ENCODE measurements at regions of chr2 and their contacts with region 1.

Region 1: DNA sequence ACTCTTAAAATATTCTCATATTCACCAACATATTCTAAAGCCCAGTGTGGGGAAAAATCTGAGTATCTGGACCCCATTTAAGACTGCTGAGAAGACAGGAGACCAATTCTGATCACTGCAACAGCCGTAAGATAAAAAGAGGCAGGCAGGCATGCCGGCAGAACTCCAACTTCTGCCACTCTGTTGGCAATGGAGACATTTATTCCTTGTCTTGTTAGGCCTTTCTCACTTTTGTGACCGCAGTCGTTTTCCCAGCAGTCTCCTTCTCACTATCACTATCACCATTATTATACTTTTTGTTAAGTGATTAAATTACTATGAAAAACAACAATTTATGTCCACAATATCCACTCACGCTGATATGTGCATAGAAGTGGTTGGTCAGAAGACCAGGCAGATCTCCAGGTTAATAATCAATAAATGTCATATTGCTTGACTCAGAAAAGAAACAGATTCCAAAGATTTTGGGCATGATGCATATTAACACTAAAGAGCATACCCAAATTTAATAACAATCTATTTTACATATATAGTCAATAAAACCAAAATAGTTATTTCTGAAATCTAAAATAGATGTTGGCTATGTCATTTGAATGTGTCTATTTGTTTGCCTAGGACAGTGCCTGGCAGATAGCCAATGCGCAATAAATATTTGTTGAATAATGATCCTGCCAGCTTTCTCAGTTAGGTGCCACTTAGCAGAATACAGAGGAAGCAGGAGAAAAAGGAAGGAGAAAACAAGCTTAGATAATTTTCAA is 38.2 kb downstream of the SESTD1 start:
- DNase-seq: no peak
- ATAC-seq: no peak
- H3K4me3 ChIP-seq: no peak overlapping the region
- H3K27ac ChIP-seq: no peak overlapping the region
- H3K4me1 ChIP-seq: no peaks in the 10 kb centered on the region
- H3K27me3 ChIP-seq: no peaks in the 10 kb centered on the region
- CTCF ChIP-seq: no peak

Region 2: DNA sequence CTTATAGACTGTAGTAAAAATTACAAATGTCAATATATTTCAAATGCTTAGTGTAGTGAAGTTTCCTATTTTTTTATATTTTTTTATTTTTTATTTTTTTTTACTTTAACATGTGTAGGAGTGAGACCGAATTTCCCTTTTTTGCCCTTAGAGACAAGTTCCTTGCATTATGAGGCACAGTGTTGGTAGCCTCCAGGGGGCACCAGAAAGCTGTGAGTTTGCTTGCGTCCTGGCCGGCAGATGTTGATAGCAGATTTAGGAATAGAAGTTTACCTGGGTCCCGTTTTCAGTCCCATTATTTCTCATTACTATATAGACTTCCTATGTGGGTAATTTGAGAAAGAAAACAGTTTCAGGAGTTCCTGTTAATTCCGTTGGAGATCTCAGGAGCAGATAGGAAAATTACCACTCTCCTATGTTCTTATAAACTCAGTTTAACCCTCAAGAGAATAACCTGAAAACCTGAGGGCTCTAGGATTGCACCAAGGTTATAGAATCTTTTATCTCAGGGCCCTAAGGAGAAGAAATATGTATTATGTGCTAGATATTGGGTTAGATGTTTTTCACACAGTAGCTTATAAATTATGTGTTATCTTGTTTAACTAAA is 195.8 kb after region 1 on chr2:
- CTCF ChIA-PET with region 1: no interaction called
- POLR2A ChIA-PET with region 1: no interaction called
- in situ Hi-C with region 1: no loop called
- intact Hi-C with region 1: loop called (anchors 10 kb)
- DNase-seq: peak; percentile 30
- ATAC-seq: peak; percentile 84
- H3K4me3 ChIP-seq: no peak overlapping the region
- H3K27ac ChIP-seq: no peak overlapping the region
- H3K4me1 ChIP-seq: no peaks in the 10 kb centered on the region
- H3K27me3 ChIP-seq: no peaks in the 10 kb centered on the region
- CTCF ChIP-seq: peak; percentile 84

Measured in Panc1 (cell line).